WTC11 (cell line): ENCODE measurements at regions of chr6 and their contacts with region 1.

Region 1: DNA sequence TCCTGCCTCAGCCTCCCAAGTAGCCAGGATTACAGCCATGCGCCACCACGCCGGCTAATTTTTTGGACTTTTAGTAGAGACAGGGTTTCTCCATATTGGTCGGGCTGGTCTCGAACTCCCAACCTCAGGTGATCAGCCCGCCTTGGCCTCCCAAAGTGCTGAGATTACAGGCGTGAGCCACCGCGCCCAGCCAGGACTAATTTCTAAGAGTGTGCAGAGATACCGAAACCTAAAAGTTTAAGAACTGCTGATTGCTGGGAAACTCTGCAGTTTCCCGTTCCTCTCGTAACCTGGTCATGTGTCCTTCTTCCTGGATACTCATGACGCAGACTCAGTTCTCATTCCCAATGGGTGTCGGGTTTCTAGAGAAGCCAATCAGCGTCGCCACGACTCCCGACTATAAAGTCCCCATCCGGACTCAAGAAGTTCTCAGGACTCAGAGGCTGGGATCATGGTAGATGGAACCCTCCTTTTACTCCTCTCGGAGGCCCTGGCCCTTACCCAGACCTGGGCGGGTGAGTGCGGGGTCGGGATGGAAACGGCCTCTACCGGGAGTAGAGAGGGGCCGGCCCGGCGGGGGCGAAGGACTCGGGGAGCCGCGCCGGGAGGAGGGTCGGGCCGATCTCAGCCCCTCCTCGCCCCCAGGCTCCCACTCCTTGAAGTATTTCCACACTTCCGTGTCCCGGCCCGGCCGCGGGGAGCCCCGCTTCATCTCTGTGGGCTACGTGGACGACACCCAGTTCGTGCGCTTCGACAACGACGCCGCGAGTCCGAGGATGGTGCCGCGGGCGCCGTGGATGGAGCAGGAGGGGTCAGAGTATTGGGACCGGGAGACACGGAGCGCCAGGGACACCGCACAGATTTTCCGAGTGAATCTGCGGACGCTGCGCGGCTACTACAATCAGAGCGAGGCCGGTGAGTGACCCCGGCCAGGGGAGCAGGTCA is at the start of gene HLA-E:
- DNase-seq: peak; percentile 85
- ATAC-seq: peak; percentile 89
- H3K4me3 Mint-ChIP-seq: peak within 1 kb of the TSS; percentile 86
- H3K27ac Mint-ChIP-seq: peak within 1 kb of the TSS; percentile 98
- H3K4me1 Mint-ChIP-seq: peaks cover 8% of the 10 kb centered on the region
- H3K27me3 Mint-ChIP-seq: peaks cover 5% of the 10 kb centered on the region
- CTCF ChIP-seq: no peak
- total RNA-seq, gene HLA-E: 44.6 to 49.0 TPM (median 44.7 TPM) in 3 replicates

Region 2: GRCh38 chr6:30510419-30511168 is 21.2 kb after region 1 on chr6:
- CTCF ChIA-PET with region 1: interaction called, 16 read pairs
- POLR2A ChIA-PET with region 1: no interaction called
- DNase-seq: no peak
- ATAC-seq: no peak
- H3K4me3 Mint-ChIP-seq: no peak overlapping the region
- H3K27ac Mint-ChIP-seq: peak overlapping the region; percentile 18; the same call in 1 of the 2 replicates
- H3K4me1 Mint-ChIP-seq: peaks cover 33% of the 10 kb centered on the region
- H3K27me3 Mint-ChIP-seq: no peaks in the 10 kb centered on the region
- CTCF ChIP-seq: no peak

Region 3: DNA sequence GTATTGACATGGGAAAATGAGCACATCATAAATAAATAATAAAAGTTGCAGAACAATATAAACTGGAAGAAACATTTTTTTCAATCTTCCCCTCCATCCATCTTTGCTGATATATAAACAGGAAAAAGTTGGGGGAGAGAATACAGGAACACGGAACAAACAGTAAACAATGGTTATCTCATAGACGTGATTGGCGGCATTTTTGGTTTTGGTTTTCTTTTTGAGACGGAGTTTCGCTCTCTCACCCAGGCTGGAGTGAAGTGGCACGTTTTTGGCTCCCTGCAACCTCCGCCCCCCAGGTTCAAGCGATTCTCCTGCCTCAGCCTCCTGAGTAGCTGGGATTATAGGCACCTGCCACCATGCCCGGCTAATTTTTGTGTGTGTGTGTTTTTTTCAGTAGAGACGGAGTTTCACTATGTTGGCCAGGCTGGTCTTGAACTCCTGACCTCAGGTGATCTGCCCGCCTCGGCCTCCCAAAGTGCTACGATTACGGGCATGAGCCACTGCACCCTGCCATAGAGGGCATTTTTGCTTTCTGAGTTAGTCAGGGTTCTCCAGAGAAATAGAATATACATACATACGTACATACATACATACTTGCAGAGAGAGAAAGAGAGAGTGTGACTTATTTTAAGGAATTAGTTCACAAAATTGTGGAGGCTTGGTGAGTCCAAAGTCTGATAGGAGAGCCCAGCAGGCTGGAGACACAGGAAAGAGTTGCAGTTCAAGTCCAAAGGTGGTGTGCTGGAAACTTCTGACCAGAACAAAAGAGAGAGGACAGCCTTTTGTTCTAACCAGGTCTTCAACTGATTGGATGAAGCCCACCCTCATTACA is 44.3 kb after region 1 on chr6:
- CTCF ChIA-PET with region 1: interaction called, 40 read pairs
- POLR2A ChIA-PET with region 1: no interaction called
- DNase-seq: no peak
- ATAC-seq: no peak
- H3K4me3 Mint-ChIP-seq: no peak overlapping the region
- H3K27ac Mint-ChIP-seq: no peak overlapping the region
- H3K4me1 Mint-ChIP-seq: no peaks in the 10 kb centered on the region
- H3K27me3 Mint-ChIP-seq: no peaks in the 10 kb centered on the region; the same call in 1 of the 2 replicates
- CTCF ChIP-seq: no peak